ENCODE measurements at regions of chr1 and their contacts with region 1.

Region 1: DNA sequence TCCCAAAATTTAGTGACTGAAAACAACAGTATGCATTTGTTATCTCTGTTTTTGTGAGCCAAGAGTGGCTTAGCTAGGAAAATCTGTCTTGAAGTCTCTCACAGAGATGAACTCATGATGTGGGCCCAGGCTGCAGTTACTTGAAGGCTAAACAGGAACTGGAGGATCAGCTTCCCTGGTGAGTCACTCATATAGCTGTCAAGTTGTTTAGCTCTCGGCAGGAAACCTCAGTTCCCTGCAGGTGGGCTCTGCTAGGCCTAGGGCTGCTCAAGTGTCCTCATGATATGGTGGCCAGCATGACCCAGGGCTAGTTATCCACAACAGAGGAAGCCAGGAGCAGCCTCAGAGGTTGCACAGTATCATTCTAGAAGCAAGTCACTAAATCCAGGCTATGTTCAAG is 30.2 kb upstream of the DDX59 start:
- DNase-seq: no peak
- H3K4me3 ChIP-seq: no peak overlapping the region
- H3K27ac ChIP-seq: no peak overlapping the region
- H3K4me1 ChIP-seq: no peaks in the 10 kb centered on the region
- H3K27me3 ChIP-seq: no peaks in the 10 kb centered on the region
- CTCF ChIP-seq: no peak
- POLR2A ChIP-seq: no peak

Region 2: DNA sequence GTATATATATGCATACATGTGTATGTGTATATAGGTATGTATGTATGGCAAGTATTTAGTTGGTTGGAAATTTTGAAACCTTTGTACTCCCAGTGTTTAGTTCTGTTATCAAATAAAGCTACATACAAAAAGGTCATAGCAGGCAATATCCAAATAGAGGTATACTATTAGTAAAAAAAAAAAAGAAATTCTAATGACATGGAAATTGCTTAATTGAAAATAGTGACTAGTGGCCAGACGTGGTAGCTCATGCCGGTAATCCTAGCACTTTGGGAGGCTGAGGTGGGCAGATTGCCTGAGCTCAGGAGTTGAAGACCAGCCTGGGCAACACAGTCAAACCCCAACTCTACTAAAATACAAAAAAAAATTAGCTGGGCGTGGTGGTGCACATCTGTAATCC is 1023.9 kb before region 1 on chr1:
- intact Hi-C with region 1: loop called (anchors 5 kb)
- DNase-seq: no peak
- H3K4me3 ChIP-seq: no peak overlapping the region
- H3K27ac ChIP-seq: no peak overlapping the region
- H3K4me1 ChIP-seq: no peaks in the 10 kb centered on the region
- H3K27me3 ChIP-seq: no peaks in the 10 kb centered on the region
- CTCF ChIP-seq: no peak
- POLR2A ChIP-seq: no peak

Region 3: GRCh38 chr1:201515895-201516294 is 816.0 kb after region 1 on chr1:
- intact Hi-C with region 1: no loop called
- DNase-seq: no peak
- H3K4me3 ChIP-seq: no peak overlapping the region
- H3K27ac ChIP-seq: no peak overlapping the region
- H3K4me1 ChIP-seq: peaks cover 25% of the 10 kb centered on the region
- H3K27me3 ChIP-seq: no peaks in the 10 kb centered on the region
- CTCF ChIP-seq: no peak
- POLR2A ChIP-seq: no peak

Measured in vagina (tissue), 2 donors.